Activated T-helper 2 cell treated with anti-CD3 and anti-CD28 coated beads, Interferon-gamma antibody, Interleukin-2, Interleukin-4, amounts not matched to agents 10 μg/mL and 5 μg/mL and 100 μg/mL, durations not matched to agents 14 hours and 24 hours and 36 hours (primary cell): ENCODE measurements at regions of chr2 and their contacts with region 1.

Region 1: GRCh38 chr2:113910110-113910717 is 20.3 kb downstream of the ACTR3 start:
- DNase-seq: no peak
- H3K4me3 Mint-ChIP-seq: no peak overlapping the region
- H3K27ac Mint-ChIP-seq: peak overlapping the region; percentile 86
- H3K4me1 Mint-ChIP-seq: peaks cover 61% of the 10 kb centered on the region
- H3K27me3 Mint-ChIP-seq: no peaks in the 10 kb centered on the region

Region 2: DNA sequence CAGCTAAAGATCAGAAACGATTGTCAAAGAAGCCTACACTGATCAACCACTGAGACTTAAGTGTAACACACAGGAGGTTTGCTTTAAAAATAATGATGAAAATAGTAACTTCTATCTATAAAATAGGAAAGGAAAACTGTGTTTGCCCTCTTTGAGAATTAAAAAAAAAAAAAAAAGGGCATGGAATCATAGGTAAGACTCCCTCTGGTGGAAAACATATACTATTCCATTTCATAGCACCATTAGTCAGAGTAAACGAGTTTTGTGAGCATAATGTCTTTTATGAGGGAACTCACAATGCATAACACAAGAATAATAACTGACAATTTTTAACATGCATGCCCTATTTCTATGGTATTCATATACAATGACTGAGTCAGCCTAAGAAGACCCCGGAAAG is 190.0 kb before region 1 on chr2:
- intact Hi-C with region 1: no loop called
- DNase-seq: no peak
- H3K4me3 Mint-ChIP-seq: no peak overlapping the region
- H3K27ac Mint-ChIP-seq: no peak overlapping the region
- H3K4me1 Mint-ChIP-seq: peaks cover 5% of the 10 kb centered on the region
- H3K27me3 Mint-ChIP-seq: no peaks in the 10 kb centered on the region

Region 3: GRCh38 chr2:113940891-113941290 is 30.7 kb after region 1 on chr2:
- intact Hi-C with region 1: loop called (anchors 5 kb)
- DNase-seq: no peak
- H3K4me3 Mint-ChIP-seq: no peak overlapping the region
- H3K27ac Mint-ChIP-seq: no peak overlapping the region
- H3K4me1 Mint-ChIP-seq: peaks cover 5% of the 10 kb centered on the region
- H3K27me3 Mint-ChIP-seq: no peaks in the 10 kb centered on the region

Region 4: DNA sequence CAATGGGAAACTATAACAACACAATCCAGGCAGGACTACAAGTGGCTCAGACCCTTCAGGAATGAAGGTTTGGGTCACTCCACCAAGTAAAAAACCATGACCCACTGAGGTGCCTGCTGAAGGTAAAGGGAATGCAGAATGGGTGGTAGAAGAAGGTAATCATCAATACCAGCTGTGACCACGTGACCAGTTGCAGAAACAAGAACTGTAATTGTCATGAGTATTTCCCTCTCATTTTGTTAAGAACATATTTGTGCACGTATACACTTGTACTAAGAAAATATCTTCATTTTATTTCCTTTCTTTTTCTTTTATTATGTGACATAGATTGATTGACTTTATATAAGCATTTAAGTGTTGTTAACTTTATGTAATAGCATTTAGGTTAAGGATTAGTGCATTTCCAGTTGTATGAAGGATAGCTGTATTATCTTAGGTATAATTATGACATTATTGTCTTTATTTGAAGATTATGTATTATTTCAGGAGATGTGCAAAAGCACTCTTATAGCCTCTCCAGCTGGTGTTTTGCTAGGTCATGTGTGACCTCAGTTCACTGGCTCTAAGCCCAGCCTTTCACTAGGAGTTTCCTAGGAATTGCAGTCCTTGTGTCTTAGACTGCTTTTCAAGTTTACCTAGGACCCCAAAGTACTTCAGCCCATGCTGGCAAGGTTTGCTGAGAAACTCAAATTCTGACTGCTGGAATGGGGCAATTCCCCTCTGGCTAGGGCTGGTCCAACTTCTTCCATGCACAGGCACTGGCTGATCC is 406.5 kb after region 1 on chr2:
- intact Hi-C with region 1: no loop called
- DNase-seq: no peak
- H3K4me3 Mint-ChIP-seq: no peak overlapping the region
- H3K27ac Mint-ChIP-seq: no peak overlapping the region
- H3K4me1 Mint-ChIP-seq: no peaks in the 10 kb centered on the region
- H3K27me3 Mint-ChIP-seq: no peaks in the 10 kb centered on the region